ENCODE measurements at regions of chr12 and their contacts with region 1.

Region 1: DNA sequence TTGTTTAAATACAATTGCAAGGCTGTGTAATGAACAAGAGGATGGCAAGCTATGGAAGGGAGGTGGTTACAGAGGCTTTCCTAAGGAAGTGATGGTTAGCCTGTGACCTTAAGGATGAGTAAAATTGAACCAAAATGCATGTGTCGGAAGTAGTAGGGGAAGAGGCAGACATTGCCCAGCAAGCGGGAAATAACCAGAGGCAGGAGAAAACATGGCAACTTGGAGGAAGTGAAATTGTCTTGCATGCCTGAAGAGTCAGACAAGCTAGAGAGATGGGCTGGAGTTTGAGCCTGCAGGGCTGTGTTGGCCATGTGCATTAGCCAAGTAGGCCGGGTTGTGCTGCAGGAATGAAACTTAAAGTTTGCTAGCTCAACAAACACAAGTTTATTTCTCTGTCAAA is 96.2 kb downstream of the BTG1 start:
- DNase-seq: peak; percentile 74
- ATAC-seq: peak; percentile 80
- H3K4me3 ChIP-seq: no peak overlapping the region
- H3K27ac ChIP-seq: no peak overlapping the region
- H3K4me1 ChIP-seq: peaks cover 24% of the 10 kb centered on the region
- H3K27me3 ChIP-seq: no peaks in the 10 kb centered on the region
- CTCF ChIP-seq: no peak
- EP300 ChIP-seq: peak in 1 of 2 experiments; percentile 33; a peak in 1 of 4 replicates
- POLR2A ChIP-seq: no peak
- RAD21 ChIP-seq: no peak

Region 2: GRCh38 chr12:91890742-91891141 is 158.7 kb before region 1 on chr12:
- CTCF ChIA-PET with region 1: no interaction called
- POLR2A ChIA-PET with region 1: no interaction called
- RAD21 ChIA-PET with region 1: no interaction called
- SMC1A ChIA-PET with region 1: no interaction called
- in situ Hi-C with region 1: no loop called
- intact Hi-C with region 1: no loop called
- DNase-seq: no peak
- ATAC-seq: no peak
- H3K4me3 ChIP-seq: no peak overlapping the region
- H3K27ac ChIP-seq: no peak overlapping the region
- H3K4me1 ChIP-seq: no peaks in the 10 kb centered on the region
- H3K27me3 ChIP-seq: no peaks in the 10 kb centered on the region
- CTCF ChIP-seq: no peak
- EP300 ChIP-seq: no peak
- POLR2A ChIP-seq: no peak
- RAD21 ChIP-seq: no peak

Region 3: GRCh38 chr12:92059976-92060375 is 10.6 kb after region 1 on chr12:
- CTCF ChIA-PET with region 1: interaction called, 7 read pairs
- POLR2A ChIA-PET with region 1: interaction called, 19 read pairs
- RAD21 ChIA-PET with region 1: interaction called, 25 read pairs
- SMC1A ChIA-PET with region 1: interaction called, 95 read pairs
- in situ Hi-C with region 1: no loop called
- intact Hi-C with region 1: no loop called
- DNase-seq: no peak
- ATAC-seq: 0 out of 3 replicates have a peak, but pooled peaks have one; percentile 12
- H3K4me3 ChIP-seq: no peak overlapping the region
- H3K27ac ChIP-seq: no peak overlapping the region
- H3K4me1 ChIP-seq: peaks cover 25% of the 10 kb centered on the region
- H3K27me3 ChIP-seq: no peaks in the 10 kb centered on the region
- CTCF ChIP-seq: no peak
- EP300 ChIP-seq: no peak
- POLR2A ChIP-seq: no peak
- RAD21 ChIP-seq: no peak

Region 4: DNA sequence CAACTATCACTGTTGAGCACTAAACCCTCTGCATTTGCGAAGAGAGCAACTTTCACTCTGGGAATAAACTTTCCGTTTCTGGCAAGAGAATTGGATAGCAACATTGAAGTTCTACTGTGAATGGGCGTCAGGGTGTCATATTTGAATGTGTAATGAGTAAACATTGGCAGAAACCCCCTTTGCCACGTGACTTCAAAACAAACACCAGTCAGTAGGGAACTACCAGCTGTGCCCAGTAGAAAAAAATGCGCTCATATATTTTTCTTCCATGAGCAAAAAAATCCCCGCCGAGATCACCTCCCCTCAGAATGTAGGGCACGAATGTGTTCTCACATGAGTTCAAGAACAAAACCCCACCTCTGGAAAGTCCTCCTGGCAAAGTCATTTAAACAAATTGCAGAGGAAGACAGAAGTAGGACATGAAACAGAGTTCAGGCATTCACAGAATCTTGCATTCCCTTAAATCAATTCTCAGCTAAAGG is 15.7 kb after region 1 on chr12:
- CTCF ChIA-PET with region 1: interaction called, 7 read pairs
- POLR2A ChIA-PET with region 1: interaction called, 19 read pairs
- RAD21 ChIA-PET with region 1: interaction called, 25 read pairs
- SMC1A ChIA-PET with region 1: interaction called, 95 read pairs
- in situ Hi-C with region 1: no loop called
- intact Hi-C with region 1: no loop called
- DNase-seq: peak; percentile 78
- ATAC-seq: peak; percentile 81
- H3K4me3 ChIP-seq: no peak overlapping the region
- H3K27ac ChIP-seq: peak overlapping the region; percentile 3
- H3K4me1 ChIP-seq: peaks cover 13% of the 10 kb centered on the region
- H3K27me3 ChIP-seq: no peaks in the 10 kb centered on the region
- CTCF ChIP-seq: no peak
- EP300 ChIP-seq: peak; percentile 25 to 46; a peak in 1 of 4 replicates
- POLR2A ChIP-seq: no peak
- RAD21 ChIP-seq: no peak

Region 5: DNA sequence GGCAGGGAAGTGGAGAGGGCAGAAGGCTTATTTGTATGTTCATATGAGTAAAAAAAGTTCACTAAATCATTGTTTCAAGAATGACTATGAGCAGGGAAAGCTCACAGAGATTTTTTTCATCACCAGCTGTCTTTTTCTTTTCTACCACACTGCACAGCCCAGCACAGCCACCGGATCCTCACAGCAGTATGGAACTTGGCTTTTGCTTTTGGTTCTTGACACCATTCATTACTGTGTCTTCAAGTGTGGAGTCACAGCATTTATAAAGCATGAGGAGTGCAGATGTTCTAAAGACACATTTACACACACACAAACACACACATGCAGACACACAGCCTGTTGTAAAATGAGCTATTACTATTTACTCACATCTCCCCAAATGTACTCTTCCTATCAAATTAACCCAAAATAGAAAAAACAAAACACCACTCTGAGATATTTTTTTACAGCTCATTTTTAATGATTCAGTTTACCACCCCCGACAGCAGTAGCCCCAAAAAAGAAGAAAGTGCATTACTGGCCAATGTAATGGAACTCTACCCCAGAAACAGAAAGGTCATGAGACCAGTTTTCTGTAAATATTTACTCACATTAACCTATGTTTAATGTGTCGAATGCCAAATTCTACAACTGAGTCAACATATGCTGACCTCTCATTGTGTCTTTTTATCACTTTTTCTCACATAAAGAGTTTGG is 35.8 kb after region 1 on chr12:
- CTCF ChIA-PET with region 1: interaction called, 3 read pairs
- POLR2A ChIA-PET with region 1: interaction called, 5 read pairs
- RAD21 ChIA-PET with region 1: interaction called, 4 read pairs
- SMC1A ChIA-PET with region 1: interaction called, 11 read pairs
- in situ Hi-C with region 1: no loop called
- intact Hi-C with region 1: no loop called
- DNase-seq: no peak
- ATAC-seq: peak; percentile 85
- H3K4me3 ChIP-seq: no peak overlapping the region
- H3K27ac ChIP-seq: 0 out of 2 replicates have a peak overlapping the region, but pooled peaks have one; percentile 12
- H3K4me1 ChIP-seq: peaks cover 7% of the 10 kb centered on the region
- H3K27me3 ChIP-seq: no peaks in the 10 kb centered on the region
- CTCF ChIP-seq: no peak
- EP300 ChIP-seq: no peak
- POLR2A ChIP-seq: no peak
- RAD21 ChIP-seq: peak; percentile 19; the same call in 1 of the 2 replicates